Activated T-helper 1 cell treated with anti-CD3 and anti-CD28 coated beads, Interleukin-12 subunit alpha, Interleukin-12 subunit beta, Interleukin-2, Interleukin-4 antibody, amounts not matched to agents 30 ng/mL and 10 ng/mL and 1 ng/mL, durations not matched to agents 14 hours and 24 hours and 36 hours (primary cell): ENCODE measurements at regions of chr12 and their contacts with region 1.

Region 1: GRCh38 chr12:113334786-113335540 is at the start of gene SLC8B1:
- DNase-seq: peak; percentile 79
- H3K4me3 Mint-ChIP-seq: peak within 1 kb of the TSS; percentile 93
- H3K27ac Mint-ChIP-seq: peak within 1 kb of the TSS; percentile 68
- H3K4me1 Mint-ChIP-seq: peaks cover 12% of the 10 kb centered on the region
- H3K27me3 Mint-ChIP-seq: peaks cover 5% of the 10 kb centered on the region
- total RNA-seq, gene SLC8B1: 21.2 TPM in 2 replicates

Region 2: GRCh38 chr12:111841750-111842555 is 1493.0 kb before region 1 on chr12 and contains the start of gene MAPKAPK5:
- intact Hi-C with region 1: loop called (anchors 5 kb)
- DNase-seq: peak; percentile 95
- H3K4me3 Mint-ChIP-seq: peak within 1 kb of the TSS; percentile 98
- H3K27ac Mint-ChIP-seq: peak within 1 kb of the TSS; percentile 99
- H3K4me1 Mint-ChIP-seq: peaks cover 49% of the 10 kb centered on the region
- H3K27me3 Mint-ChIP-seq: no peaks in the 10 kb centered on the region
- total RNA-seq, gene MAPKAPK5: 82.1 and 86.5 TPM in 2 replicates

Region 3: DNA sequence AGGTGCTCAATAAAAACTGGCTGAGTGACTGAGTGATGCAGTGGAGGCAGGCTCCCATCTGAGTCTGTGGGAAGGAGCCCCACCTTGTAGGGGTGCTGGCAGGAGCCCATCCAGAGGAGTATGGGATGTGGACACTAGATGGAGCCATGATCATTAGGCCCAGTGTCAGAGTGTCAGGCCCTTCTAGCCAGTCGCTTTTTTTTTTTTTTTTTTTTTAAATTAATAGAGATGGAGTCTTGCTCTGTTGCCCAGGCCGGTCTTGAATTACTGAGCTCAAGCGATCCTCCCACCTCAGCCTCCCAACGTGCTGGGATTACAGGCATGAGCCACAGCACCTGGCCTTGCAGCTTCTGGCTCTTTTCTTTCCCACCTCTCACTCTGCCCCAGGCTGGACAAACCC is 138.0 kb before region 1 on chr12:
- intact Hi-C with region 1: loop called (anchors 1 kb)
- DNase-seq: peak; percentile 55
- H3K4me3 Mint-ChIP-seq: no peak overlapping the region
- H3K27ac Mint-ChIP-seq: no peak overlapping the region
- H3K4me1 Mint-ChIP-seq: peaks cover 11% of the 10 kb centered on the region
- H3K27me3 Mint-ChIP-seq: no peaks in the 10 kb centered on the region

Region 4: DNA sequence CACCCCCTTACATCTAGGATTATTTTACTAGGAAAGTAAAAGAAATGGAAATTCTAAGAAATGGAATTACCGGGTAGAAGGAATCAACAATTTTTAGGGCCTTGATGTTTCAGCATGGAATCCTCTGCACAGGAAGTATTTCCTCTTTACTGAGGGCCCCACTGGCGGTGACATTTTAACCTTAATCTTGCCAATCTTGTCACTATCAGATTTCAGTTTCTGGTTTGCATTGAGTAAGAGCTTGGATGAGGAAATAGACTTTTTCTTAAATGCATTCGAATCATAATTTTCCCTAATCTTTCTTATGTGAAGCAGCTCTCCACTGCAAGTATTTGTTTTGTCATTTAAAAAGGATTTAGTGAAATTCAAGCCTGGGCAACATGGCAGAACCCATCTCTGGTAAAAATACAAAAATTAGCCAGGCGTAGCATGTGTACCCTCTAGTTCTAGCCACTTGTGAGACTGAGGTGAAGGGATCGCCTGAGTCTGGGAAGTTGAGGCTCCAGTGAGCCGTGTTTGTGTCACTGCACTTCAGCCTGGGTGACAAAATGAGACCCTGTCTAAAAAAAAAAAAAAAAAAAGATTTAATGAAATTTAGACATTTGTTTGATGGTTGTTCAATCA is 73.0 kb before region 1 on chr12:
- intact Hi-C with region 1: loop called (anchors 1 kb)
- DNase-seq: peak; percentile 33
- H3K4me3 Mint-ChIP-seq: peak overlapping the region; percentile 34
- H3K27ac Mint-ChIP-seq: peak overlapping the region; percentile 59
- H3K4me1 Mint-ChIP-seq: peaks cover 42% of the 10 kb centered on the region
- H3K27me3 Mint-ChIP-seq: no peaks in the 10 kb centered on the region

Region 5: DNA sequence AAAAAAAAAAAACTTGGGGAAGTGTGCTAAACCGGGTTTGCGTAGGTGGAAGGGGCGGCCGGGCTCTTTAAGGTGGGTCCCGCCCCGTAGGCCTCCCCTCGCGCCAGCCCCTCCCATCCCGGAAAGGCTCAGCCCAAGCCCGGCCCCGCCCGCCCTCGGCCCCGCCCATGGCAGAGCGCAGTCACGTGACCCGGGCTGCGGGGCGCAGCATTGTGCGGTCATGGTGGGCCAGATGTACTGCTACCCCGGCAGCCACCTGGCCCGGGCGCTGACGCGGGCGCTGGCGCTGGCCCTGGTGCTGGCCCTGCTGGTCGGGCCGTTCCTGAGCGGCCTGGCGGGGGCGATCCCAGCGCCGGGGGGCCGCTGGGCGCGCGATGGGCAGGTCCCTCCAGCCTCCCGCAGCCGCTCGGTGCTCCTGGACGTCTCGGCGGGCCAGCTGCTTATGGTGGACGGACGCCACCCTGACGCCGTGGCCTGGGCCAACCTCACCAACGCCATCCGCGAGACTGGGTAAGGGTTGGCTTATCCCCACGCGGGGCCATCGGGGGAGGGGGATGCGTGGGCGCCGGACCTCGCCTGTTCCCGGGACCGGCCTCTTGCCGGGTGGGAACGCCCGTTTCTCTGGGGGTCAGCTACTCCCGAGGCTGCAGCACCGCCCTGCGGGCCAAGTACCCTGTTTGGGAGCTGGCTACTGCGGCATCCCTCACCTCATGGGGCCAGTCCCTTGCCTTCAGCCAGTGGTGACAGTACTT is 23.6 kb after region 1 on chr12 and contains the start of gene PLBD2:
- intact Hi-C with region 1: loop called (anchors 1 kb)
- DNase-seq: peak; percentile 89
- H3K4me3 Mint-ChIP-seq: peak within 1 kb of the TSS; percentile 89
- H3K27ac Mint-ChIP-seq: peak within 1 kb of the TSS; percentile 69
- H3K4me1 Mint-ChIP-seq: peaks cover 13% of the 10 kb centered on the region
- H3K27me3 Mint-ChIP-seq: peaks cover 4% of the 10 kb centered on the region
- total RNA-seq, gene PLBD2: 15.3 and 16.3 TPM in 2 replicates

Region 6: DNA sequence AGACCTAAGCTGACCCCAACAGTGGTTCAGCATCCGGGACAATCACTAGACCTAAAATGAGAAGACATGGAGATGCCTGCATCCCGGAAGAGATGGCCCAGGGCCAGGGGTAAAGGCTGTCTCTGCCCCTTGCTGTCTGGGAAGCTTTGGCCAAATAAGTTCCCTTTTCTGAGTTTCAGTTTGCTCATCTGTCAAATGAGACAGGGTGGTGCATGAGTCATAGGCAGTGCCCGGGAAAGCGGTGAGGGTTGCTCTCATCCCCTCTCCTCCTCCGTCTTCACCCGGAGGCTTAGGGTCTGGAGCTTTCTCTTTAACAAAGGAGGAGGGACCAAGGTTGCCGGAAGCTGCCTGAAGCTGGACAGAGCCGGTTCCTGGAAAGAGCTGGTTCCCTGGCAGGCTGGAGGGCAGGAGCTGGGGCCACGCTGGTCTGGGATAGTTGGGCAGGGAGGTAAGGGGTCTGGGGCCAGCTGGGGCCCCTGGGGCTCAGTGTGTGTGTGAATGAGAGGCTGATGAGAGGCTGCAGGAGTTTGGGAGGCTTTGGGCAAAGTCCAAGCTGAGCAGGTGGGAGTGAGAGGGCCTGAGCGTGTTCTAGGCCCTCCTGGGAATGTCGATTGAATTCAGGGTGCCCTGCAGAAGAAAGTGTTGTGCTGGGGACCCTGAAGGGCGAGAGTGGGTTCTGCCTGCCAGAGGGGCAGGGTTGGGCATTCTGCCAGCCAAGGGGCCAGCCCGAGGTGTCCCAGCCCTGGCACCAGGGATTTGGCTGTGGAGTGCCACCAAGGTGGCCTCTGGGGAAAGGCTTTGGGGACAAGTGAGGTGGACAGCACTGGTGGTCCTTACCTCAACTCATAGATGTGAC is 87.3 kb after region 1 on chr12 and contains the start of gene SDSL:
- intact Hi-C with region 1: loop called (anchors 1 kb)
- DNase-seq: peak; percentile 17
- H3K4me3 Mint-ChIP-seq: peak within 1 kb of the TSS; percentile 81
- H3K27ac Mint-ChIP-seq: peak within 1 kb of the TSS; percentile 79
- H3K4me1 Mint-ChIP-seq: peaks cover 11% of the 10 kb centered on the region
- H3K27me3 Mint-ChIP-seq: peaks cover 4% of the 10 kb centered on the region
- total RNA-seq, gene SDSL: 0.52 and 0.54 TPM in 2 replicates

Region 7: DNA sequence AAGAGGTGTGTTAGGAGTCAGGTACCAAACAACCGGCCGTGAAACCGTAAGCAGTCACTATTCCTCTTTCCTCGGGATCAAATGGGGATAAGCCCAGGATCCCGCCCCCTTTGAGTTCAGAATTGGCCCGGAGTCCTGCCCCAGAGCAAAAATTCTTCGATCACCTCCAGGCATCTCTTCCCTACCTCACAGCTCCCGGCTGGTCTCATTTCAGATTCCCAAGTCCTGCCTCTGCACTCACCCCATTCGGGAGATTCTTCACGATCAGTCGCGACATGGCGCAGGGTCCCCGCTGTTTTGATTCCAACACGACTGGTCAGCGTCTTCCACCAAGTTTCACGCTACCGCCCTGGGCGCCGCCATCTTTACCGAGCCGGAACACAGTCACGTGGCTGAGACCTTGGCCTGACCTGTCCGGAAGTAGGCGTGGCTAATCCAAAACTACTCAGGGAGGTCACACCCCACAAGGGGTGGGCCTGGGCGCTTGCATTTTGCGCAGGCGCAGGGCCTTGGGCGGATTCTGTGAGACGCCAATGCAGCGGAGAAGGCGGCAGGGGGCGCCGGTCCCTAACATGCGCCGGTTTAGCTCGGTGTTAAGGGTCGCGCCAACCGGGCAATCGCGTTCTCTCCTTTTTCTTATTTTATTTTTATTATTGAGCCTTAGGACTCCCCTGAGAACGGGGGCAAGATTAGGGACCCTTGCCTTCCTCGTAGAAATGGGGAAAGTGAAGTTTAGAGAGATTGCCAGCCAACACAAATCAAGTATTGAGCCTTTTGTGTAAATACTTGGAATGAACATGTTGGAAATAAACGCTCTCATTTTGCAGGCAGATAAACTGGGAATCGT is 631.2 kb after region 1 on chr12 and contains the start of gene RBM19:
- intact Hi-C with region 1: loop called (anchors 1 kb)
- DNase-seq: peak; percentile 97
- H3K4me3 Mint-ChIP-seq: peak within 1 kb of the TSS; percentile 99
- H3K27ac Mint-ChIP-seq: peak within 1 kb of the TSS; percentile 99
- H3K4me1 Mint-ChIP-seq: peaks cover 60% of the 10 kb centered on the region
- H3K27me3 Mint-ChIP-seq: peaks cover 3% of the 10 kb centered on the region
- total RNA-seq, gene RBM19: 102 TPM in 2 replicates